H1 (cell line): ENCODE measurements at regions of chr14 and their contacts with region 1.

Region 1: GRCh38 chr14:100037353-100037752 is 27.9 kb upstream of the EVL start:
- DNase-seq: no peak
- H3K4me3 ChIP-seq: no peak overlapping the region
- H3K27ac ChIP-seq: no peak overlapping the region
- H3K4me1 ChIP-seq: no peaks in the 10 kb centered on the region; a peak in 1 of 7 replicates
- H3K27me3 ChIP-seq: no peaks in the 10 kb centered on the region
- CTCF ChIP-seq: no peak
- EP300 ChIP-seq: no peak
- POLR2A ChIP-seq: no peak
- RAD21 ChIP-seq: no peak

Region 2: GRCh38 chr14:100025111-100025510 is 12.2 kb before region 1 on chr14:
- CTCF ChIA-PET with region 1: interaction called, 40 read pairs
- POLR2A ChIA-PET with region 1: interaction called, 6 read pairs
- DNase-seq: peak in 1 of 2 experiments; percentile 29
- H3K4me3 ChIP-seq: no peak overlapping the region
- H3K27ac ChIP-seq: no peak overlapping the region
- H3K4me1 ChIP-seq: no peaks in the 10 kb centered on the region
- H3K27me3 ChIP-seq: peaks cover 0 to 2% (median 0%) of the 10 kb centered on the region in 4 experiments; a peak in 2 of 7 replicates
- CTCF ChIP-seq: peak; percentile 68 to 80 (median 73)
- EP300 ChIP-seq: no peak
- POLR2A ChIP-seq: no peak
- RAD21 ChIP-seq: peak; percentile 70 to 79